Sciatic nerve (tissue), 2 donors: ENCODE measurements at regions of chr18 and their contacts with region 1.

Region 1: GRCh38 chr18:37639846-37640245 is 74.2 kb upstream of the CELF4 start:
- DNase-seq: no peak
- ATAC-seq: no peak

Region 2: DNA sequence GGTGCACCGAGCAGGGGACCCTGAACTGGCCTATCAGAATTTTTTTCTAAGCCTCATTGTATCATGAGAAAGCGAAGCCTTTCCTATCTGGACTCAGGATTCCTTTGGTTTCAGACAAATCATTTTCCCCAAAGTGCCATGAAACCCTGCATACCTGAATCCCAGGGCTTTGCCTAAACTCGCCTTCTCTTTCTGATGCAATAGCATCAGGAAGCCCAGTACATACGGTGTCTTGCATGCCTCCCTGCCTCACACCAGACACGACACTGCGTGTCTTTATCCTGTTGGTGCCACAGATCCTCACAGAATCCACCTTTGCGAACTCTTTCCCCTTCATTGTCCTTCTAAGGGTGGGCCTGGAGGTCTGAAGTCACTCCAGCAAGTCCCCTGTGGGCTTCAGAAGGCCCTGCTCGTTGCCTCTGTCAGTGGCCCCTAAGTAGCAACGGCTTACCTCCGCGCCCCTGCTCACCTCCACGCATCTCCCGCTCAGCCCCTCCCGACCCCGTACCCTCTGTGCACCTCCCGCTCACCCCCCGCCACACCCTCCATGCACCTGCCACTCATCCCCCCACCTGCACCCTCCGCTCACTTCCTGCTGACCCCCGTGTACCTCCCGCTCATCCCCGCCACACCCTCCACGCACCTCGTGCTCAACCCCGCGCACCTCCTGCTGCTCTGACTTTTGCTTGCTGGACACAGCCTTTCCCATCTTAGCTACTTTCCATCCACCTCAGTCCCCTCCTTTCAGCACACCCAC is 894.4 kb before region 1 on chr18:
- intact Hi-C with region 1: loop called (anchors 5 kb)
- DNase-seq: no peak
- ATAC-seq: no peak

Region 3: DNA sequence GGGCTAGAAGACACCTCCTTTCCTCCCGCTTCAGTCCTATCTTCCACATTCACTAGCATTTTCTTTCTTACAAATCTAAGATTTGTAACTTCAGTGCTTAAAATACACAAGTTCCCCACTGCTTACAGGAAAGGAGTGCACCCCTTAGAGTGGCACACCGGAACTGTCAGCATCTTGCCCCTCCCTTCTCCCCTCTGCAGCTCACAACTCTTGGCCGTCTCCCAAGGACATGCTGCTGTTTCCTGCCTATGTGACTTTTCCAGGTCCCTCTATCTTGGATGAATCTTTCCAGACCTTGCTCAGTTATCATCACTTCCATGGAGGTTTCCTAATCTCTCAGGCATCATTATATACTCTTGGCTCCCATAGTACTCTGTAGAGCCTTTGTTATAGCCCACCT is 409.1 kb before region 1 on chr18:
- intact Hi-C with region 1: no loop called
- DNase-seq: no peak
- ATAC-seq: no peak

Region 4: GRCh38 chr18:37944700-37945270 is 304.9 kb after region 1 on chr18:
- intact Hi-C with region 1: loop called (anchors 5 kb)
- DNase-seq: no peak
- ATAC-seq: no peak